HEK293 (cell line): ENCODE measurements at regions of chr5 and their contacts with region 1.

Region 1: GRCh38 chr5:4879693-4880303 is 260.3 kb upstream of the ADAMTS16 start:
- H3K4me3 ChIP-seq: no peak overlapping the region
- H3K27ac ChIP-seq: no peak overlapping the region
- H3K4me1 ChIP-seq: no peaks in the 10 kb centered on the region
- CTCF ChIP-seq: peak; percentile 89

Region 2: GRCh38 chr5:4817767-4818166 is 62.0 kb before region 1 on chr5:
- CTCF ChIA-PET with region 1: no interaction called
- POLR2A ChIA-PET with region 1: no interaction called
- H3K4me3 ChIP-seq: no peak overlapping the region
- H3K27ac ChIP-seq: no peak overlapping the region
- H3K4me1 ChIP-seq: no peaks in the 10 kb centered on the region
- CTCF ChIP-seq: no peak

Region 3: GRCh38 chr5:4941957-4942830 is 62.4 kb after region 1 on chr5:
- CTCF ChIA-PET with region 1: interaction called, 12 read pairs
- POLR2A ChIA-PET with region 1: no interaction called
- H3K4me3 ChIP-seq: no peak overlapping the region
- H3K27ac ChIP-seq: no peak overlapping the region
- H3K4me1 ChIP-seq: no peaks in the 10 kb centered on the region
- CTCF ChIP-seq: peak; percentile 75

Region 4: GRCh38 chr5:4947893-4948536 is 68.2 kb after region 1 on chr5:
- CTCF ChIA-PET with region 1: interaction called, 12 read pairs
- POLR2A ChIA-PET with region 1: no interaction called
- H3K4me3 ChIP-seq: no peak overlapping the region
- H3K27ac ChIP-seq: no peak overlapping the region
- H3K4me1 ChIP-seq: no peaks in the 10 kb centered on the region
- CTCF ChIP-seq: no peak

Region 5: GRCh38 chr5:5141625-5142532 is 262.1 kb after region 1 on chr5:
- CTCF ChIA-PET with region 1: interaction called, 23 read pairs
- POLR2A ChIA-PET with region 1: no interaction called
- H3K4me3 ChIP-seq: peak overlapping the region; percentile 77
- H3K27ac ChIP-seq: no peak overlapping the region
- H3K4me1 ChIP-seq: no peaks in the 10 kb centered on the region; the same call in 1 of the 2 replicates
- CTCF ChIP-seq: no peak

Region 6: GRCh38 chr5:5398046-5398445 is 518.2 kb after region 1 on chr5:
- CTCF ChIA-PET with region 1: interaction called, 19 read pairs
- POLR2A ChIA-PET with region 1: no interaction called
- H3K4me3 ChIP-seq: no peak overlapping the region
- H3K27ac ChIP-seq: no peak overlapping the region
- H3K4me1 ChIP-seq: no peaks in the 10 kb centered on the region
- CTCF ChIP-seq: no peak